Left colon (tissue), 2 donors: ENCODE measurements at regions of chr12 and their contacts with region 1.

Region 1: GRCh38 chr12:124036674-124037109 is 63.7 kb downstream of the ZNF664 start:
- DNase-seq: peak in 1 of 2 donors; percentile 48
- ATAC-seq: peak; percentile 70

Region 2: GRCh38 chr12:124321040-124321481 is 284.4 kb after region 1 on chr12:
- intact Hi-C with region 1: loop called in 1 of 2 experiments (anchors 10 kb)
- DNase-seq: peak; percentile 46 to 73
- ATAC-seq: peak; percentile 79

Region 3: DNA sequence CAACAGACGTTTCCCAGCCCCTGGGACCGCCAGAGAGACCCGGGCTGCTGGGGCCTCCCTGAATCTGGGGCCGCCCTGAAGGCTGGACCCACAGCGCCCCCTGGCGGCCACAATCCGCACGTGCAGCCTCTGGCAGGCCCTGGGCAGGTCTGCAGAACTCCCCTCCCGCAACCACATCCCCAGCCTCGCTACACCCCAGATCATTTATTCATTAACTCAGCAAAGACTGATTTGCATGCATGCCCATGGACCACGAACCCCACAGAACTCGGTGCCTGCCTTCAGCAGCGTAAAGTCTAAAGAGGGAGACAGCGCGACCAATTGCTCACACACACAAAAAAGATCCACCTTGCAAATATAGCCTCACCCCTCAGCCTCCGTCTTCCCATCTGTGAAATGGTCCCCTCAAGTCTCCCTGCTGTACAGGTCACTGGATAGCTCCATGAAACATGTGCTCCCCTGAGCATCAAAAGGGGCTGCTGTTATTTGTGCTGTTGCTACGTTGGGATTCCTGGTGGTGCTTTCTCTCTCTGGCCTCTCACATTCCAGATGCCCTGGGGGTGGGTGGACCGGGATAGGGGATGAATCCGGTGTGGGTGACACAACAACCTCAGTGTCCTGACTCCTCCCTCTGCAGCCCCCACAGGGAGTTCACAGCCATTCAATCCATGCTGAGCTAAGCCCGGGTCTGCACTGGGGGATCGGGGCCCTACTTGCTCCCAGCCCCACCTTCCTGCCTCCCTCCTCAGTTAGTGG is 730.6 kb after region 1 on chr12:
- intact Hi-C with region 1: loop called (anchors 5 to 10 kb)
- DNase-seq: peak in 1 of 2 donors; percentile 81
- ATAC-seq: peak; percentile 72